ENCODE measurements at regions of chr15 and their contacts with region 1.

Region 1: DNA sequence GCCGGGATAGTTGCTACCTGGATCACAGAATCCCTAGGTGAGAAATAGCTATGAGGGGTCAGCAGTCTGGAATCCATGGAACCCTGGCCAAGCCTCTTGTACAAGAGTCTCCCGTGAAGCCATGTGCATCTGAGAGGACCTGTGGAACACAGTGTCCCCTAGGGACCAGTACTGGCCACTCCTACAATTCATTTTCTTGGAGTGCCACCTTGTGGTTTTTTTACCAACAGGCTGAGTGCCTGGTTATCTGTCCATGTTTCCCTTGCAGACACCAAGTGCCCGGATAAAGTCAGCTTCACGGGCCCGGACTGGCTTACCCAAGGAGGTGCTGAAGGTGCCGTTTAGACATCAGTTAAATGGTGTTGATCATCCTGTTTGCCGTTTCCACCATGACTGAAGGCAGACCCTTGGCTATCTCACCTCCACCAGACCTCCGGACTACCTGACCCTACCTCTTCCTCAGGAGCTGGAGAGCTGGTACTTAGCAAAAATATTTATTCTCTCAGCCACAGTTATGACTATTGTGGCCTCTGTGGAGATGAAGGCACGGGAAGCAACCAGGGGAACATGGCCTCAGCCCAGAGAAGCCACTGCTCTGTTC is 93.9 kb downstream of the RBPMS2 start:
- DNase-seq: no peak
- H3K4me3 ChIP-seq: no peak overlapping the region
- H3K27ac ChIP-seq: peak overlapping the region in 1 of 2 donors; percentile 2
- H3K4me1 ChIP-seq: no peaks in the 10 kb centered on the region
- H3K27me3 ChIP-seq: no peaks in the 10 kb centered on the region
- CTCF ChIP-seq: peak; percentile 36 to 70 (median 64)
- POLR2A ChIP-seq: no peak

Region 2: DNA sequence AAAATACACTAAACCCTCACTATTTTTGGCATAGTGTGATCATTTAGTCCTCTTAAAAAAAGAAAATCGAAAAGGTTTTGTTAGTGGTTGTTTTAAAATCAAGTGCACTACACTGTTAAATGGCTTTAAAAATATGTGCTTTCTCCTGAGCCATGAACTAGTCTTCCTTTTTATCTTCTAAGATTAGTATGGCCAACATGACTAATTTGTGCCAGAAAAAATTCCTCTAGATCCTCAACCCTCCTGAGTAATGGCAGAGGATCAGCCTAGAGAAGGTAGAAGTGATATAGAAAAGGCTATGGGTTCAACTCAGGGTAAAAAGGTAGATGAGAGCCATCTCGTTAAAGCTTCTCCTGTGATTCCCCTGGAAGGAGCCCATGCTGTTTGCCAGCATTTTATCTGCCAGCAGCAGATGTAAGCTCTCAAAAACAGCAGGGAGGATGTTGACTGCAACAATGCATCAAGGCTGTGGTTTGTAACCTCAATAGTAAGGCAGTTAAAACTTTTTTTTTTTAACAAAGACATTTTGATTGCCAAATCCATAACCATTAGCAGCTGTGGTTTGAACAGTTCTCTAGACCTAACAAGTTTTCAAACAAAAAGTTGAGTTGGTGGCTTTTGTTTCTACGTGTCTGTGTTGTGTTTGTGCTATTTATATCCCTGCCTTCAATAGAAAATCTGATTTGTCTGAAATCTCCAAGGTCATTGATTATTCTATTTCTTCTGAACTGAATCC is 251.4 kb before region 1 on chr15:
- intact Hi-C with region 1: loop called (anchors 10 kb)
- DNase-seq: no peak
- H3K4me3 ChIP-seq: no peak overlapping the region
- H3K27ac ChIP-seq: peak overlapping the region; percentile 27 to 61
- H3K4me1 ChIP-seq: no peaks in the 10 kb centered on the region
- H3K27me3 ChIP-seq: no peaks in the 10 kb centered on the region
- CTCF ChIP-seq: no peak
- POLR2A ChIP-seq: no peak

Region 3: GRCh38 chr15:64599716-64600115 is 81.8 kb before region 1 on chr15:
- intact Hi-C with region 1: no loop called
- DNase-seq: no peak
- H3K4me3 ChIP-seq: no peak overlapping the region
- H3K27ac ChIP-seq: no peak overlapping the region
- H3K4me1 ChIP-seq: no peaks in the 10 kb centered on the region
- H3K27me3 ChIP-seq: no peaks in the 10 kb centered on the region
- CTCF ChIP-seq: no peak
- POLR2A ChIP-seq: no peak

Region 4: DNA sequence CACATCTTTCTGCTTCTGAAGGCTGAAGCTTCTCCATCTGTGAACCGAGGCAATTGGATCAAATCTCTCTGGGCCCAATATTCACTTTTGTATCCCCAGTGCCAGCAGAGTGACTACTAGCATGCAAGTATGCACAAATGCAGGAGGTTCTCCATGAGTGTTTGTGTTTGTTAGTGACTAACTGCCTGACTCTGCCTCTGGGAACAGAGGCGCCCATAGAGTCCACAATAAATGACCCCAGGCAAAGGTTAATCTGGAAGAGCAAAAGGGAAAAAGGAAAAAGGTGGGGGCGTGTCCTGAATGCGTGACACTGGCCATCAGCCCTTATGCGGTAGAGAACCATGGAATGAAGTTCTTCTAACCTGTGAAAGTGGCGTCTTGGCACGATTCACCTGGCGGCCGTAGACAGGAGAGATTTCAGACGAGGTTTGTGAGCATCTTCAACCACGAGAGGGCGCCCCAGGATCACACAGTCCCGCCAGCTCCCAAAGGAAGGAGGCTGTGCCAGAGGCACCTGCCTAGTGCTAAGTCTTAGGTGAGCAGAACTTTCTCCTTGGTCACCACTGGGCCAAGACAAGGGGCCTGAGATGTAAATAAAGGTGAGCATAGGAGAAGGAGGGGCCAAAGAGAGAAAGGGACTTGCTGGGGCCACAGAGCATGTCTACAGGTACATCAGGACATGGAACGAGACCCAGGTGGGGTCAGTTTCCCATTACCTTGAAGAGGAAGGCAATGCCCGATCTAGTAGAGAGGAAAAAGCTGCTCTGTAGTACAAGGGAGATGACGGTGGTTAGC is 49.7 kb after region 1 on chr15:
- intact Hi-C with region 1: loop called (anchors 5 kb)
- DNase-seq: peak; percentile 83 to 90
- H3K4me3 ChIP-seq: no peak overlapping the region
- H3K27ac ChIP-seq: no peak overlapping the region
- H3K4me1 ChIP-seq: no peaks in the 10 kb centered on the region
- H3K27me3 ChIP-seq: no peaks in the 10 kb centered on the region
- CTCF ChIP-seq: peak; percentile 72 to 94 (median 94)
- POLR2A ChIP-seq: no peak

Region 5: GRCh38 chr15:64825431-64826294 is 144.1 kb after region 1 on chr15 and contains the start of gene PIF1:
- intact Hi-C with region 1: loop called (anchors 10 kb)
- DNase-seq: peak; percentile 81 to 92
- H3K4me3 ChIP-seq: peak within 1 kb of the TSS; percentile 31 to 68 (median 56)
- H3K27ac ChIP-seq: peak within 1 kb of the TSS; percentile 36 to 78
- H3K4me1 ChIP-seq: peaks cover 7 to 12% of the 10 kb centered on the region in 2 donors
- H3K27me3 ChIP-seq: no peaks in the 10 kb centered on the region
- CTCF ChIP-seq: no peak
- POLR2A ChIP-seq: peak; percentile 21
- total RNA-seq, gene PIF1: 0.44 to 1.3 (median 0.66) TPM

Measured in breast epithelium (tissue), 4 donors.